ENCODE measurements at regions of chr14 and their contacts with region 1.

Region 1: GRCh38 chr14:101767618-101768362 is 6.3 kb downstream of the PPP2R5C start:
- DNase-seq: peak; percentile 27
- H3K4me3 Mint-ChIP-seq: no peak overlapping the region
- H3K27ac Mint-ChIP-seq: no peak overlapping the region
- H3K4me1 Mint-ChIP-seq: peaks cover 29% of the 10 kb centered on the region
- H3K27me3 Mint-ChIP-seq: no peaks in the 10 kb centered on the region

Region 2: DNA sequence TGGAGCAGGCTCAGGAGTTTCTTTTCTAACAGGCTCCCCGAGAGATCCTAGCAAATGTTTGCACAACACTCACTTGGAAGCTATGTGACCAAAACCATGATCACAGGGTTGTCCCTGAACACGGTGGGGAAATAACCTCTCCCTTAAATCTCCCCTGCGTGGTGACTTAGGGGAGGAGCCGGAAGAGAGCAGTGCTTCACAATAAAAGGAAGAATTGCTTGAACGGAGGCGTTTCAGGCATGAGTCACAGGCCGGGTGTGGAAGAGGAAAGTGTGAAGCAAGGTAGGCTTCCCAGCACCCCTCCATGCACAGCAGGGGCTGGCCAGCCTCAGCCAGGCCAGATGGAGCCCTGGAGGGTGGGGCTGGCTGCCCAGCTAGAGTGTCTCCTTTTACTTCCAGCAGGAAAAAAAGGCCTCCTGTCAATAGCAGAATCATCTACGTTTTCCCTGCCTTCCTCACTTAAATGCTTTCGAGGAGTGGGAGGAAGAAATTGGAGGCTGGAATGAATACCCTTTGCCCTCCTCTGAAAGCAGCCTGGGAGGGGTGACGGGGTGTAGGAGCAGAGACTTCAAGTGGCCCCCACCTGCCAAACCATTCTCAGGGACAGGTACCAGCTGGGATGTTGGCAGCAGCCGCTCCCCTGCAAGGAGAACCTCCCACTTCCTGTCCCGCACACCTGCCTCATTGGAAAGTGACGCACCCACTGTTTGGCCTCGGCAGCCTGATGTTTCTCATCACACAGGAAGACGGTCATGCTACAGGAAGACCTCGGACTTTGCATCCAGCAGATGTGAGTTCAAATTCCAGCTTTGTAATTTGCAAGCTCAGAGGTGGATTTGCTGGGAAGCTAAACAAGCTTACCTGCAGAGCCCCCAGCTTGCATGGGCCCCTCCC is 36.4 kb before region 1 on chr14:
- intact Hi-C with region 1: loop called (anchors 1 kb)
- DNase-seq: peak; percentile 94
- H3K4me3 Mint-ChIP-seq: peak overlapping the region; percentile 84
- H3K27ac Mint-ChIP-seq: peak overlapping the region; percentile 98
- H3K4me1 Mint-ChIP-seq: peaks cover 56% of the 10 kb centered on the region
- H3K27me3 Mint-ChIP-seq: no peaks in the 10 kb centered on the region

Region 3: DNA sequence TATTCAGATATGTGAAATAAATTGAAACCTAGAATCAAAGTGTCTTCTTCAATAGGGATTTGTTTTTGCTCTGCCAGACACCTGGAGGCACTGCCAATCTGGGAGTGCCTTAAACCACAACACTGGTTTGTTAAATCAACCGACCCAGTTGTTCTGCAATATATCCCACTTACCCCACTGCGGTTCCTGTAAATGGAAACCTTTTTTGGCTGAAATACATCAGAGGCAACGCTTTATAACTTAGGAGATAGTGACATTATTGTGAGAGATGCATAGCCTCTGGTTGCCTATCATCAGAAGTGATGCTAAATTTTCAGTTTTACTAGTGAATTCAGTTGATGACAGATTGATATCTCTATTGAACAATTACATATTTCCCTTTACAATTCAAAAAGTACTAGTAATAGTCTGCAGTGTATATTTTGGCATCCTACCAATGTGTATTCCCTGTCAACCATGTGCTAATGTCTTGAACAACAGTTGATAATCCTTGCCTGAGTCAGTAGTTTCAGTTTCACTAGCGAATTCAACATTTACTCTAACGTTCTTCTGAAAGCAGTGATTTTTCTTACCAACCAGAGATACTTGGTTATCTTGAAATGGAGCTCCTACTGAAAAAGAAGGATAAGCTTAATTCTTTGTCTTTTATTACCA is 24.3 kb after region 1 on chr14:
- intact Hi-C with region 1: loop called (anchors 2 kb)
- DNase-seq: peak; percentile 63
- H3K4me3 Mint-ChIP-seq: peak overlapping the region; percentile 64
- H3K27ac Mint-ChIP-seq: peak overlapping the region; percentile 54
- H3K4me1 Mint-ChIP-seq: peaks cover 17% of the 10 kb centered on the region
- H3K27me3 Mint-ChIP-seq: no peaks in the 10 kb centered on the region

Region 4: DNA sequence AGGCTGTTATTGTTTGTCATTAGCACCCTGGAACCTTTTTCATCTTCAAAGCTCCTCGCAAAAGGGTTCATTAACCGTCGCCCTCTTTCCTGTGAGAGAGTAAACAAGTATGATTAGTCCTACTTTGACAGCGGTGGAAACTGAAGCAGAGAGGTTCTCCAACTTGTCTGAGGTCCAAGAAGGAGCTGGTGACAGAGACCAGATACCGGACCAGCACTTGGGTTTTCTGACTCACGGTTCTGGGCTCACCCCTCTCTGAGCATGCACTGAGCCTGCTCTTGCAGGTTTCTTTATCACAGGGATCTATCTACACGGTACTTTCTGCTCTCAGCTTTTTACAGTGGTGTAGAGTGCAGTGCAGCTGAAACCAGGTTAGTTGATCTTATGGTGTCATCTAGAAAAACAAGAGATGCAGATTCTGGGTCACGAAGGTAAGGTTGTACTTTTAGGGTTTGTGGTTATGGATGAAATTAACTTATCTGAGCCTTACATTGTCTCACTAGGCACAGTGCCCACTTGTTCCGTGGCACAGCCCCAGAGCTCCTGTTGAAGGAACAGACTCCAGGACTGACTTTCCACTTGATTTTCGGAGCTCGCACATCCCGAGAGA is 55.8 kb after region 1 on chr14:
- intact Hi-C with region 1: no loop called
- DNase-seq: peak; percentile 93
- H3K4me3 Mint-ChIP-seq: peak overlapping the region; percentile 81
- H3K27ac Mint-ChIP-seq: peak overlapping the region; percentile 96
- H3K4me1 Mint-ChIP-seq: peaks cover 76% of the 10 kb centered on the region
- H3K27me3 Mint-ChIP-seq: no peaks in the 10 kb centered on the region

Region 5: GRCh38 chr14:101843665-101844064 is 75.9 kb after region 1 on chr14:
- intact Hi-C with region 1: loop called (anchors 2 kb)
- DNase-seq: peak; percentile 84
- H3K4me3 Mint-ChIP-seq: no peak overlapping the region
- H3K27ac Mint-ChIP-seq: peak overlapping the region; percentile 79
- H3K4me1 Mint-ChIP-seq: peaks cover 64% of the 10 kb centered on the region
- H3K27me3 Mint-ChIP-seq: no peaks in the 10 kb centered on the region